WTC11 (cell line): ENCODE measurements at regions of chr1 and their contacts with region 1.

Region 1: DNA sequence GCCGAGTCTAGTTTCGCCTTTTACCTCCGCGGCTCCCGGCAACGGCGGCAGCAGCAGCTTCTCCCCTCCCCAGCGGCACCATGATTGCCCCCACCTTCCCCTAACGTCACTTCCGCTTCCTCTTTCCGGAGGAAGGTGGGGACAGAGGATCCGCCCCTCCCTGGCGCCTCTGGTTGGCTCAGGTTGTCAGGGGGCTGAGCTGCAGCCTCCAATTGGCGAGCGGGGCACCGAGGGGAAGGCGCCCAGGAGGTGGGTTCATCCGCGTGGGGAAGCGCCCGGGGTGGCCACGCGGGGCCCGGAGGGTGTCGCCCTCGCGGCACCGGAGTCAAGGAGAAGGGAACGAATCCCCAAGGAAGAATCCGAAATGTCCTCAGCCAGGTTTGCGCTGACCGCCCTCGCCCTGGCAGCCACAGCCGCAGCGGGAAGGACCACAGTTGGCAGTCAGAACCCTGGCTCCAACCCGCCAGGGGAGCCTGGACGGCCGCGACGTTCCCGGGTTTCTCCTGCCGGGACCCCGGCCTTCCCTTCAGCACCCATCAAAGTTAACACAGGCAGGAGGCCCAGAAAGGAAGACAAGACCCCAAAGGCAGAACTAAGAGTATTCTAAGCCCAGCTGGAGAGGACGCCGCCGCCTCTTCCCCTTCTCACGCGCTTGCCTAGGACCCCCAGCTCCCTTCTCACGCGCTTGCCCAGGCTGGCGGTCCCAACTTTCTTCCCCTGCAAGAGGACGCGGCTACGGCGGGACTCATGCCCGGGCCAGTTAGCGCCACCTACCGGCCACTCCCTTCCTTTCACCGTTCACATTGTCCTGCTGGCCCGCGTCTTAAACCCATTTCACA is at the start of gene MTF1:
- DNase-seq: peak; percentile 96
- ATAC-seq: peak; percentile 96
- H3K4me3 Mint-ChIP-seq: peak within 1 kb of the TSS; percentile 92
- H3K27ac Mint-ChIP-seq: peak within 1 kb of the TSS; percentile 92
- H3K4me1 Mint-ChIP-seq: peaks cover 9% of the 10 kb centered on the region
- H3K27me3 Mint-ChIP-seq: no peaks in the 10 kb centered on the region
- CTCF ChIP-seq: peak; percentile 90
- total RNA-seq, gene MTF1: 10.1 to 12.2 TPM (median 10.9 TPM) in 3 replicates

Region 2: DNA sequence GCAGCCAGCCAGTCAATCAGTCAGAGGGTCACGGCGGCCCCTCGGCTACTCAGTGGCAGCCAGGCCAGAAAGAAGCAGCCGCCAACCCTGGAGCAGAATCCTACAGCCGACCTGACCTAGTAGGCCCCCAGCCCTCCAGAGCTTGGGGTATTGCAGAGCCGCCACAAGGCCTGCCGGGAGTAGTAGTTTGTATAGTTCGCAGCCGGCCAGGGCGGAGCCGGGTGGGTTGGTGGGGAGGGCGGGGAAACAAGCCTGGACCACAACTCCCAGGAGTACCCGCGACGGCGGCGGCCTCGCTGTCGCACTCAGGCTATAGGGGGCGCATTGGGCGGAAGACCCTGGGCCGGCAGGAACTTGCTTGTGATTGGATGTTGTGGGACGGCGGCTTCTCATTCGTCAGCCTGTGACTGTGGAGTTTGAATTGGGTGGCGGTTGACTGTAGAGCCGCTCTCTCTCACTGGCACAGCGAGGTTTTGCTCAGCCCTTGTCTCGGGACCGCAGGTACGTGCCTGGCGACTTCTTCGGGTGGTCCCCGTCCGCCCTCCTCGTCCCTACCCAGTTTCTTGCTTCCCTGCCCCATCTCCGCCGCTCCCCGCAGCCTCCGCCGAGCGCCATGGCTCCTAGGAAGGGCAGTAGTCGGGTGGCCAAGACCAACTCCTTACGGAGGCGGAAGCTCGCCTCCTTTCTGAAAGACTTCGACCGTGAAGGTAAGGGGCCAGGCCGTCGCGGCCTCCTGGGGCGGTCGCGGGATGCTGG is 167.5 kb before region 1 on chr1 and contains the start of gene CDCA8:
- CTCF ChIA-PET with region 1: interaction called, 10 read pairs
- POLR2A ChIA-PET with region 1: no interaction called
- DNase-seq: peak; percentile 99
- ATAC-seq: peak; percentile 91
- H3K4me3 Mint-ChIP-seq: peak within 1 kb of the TSS; percentile 98
- H3K27ac Mint-ChIP-seq: peak within 1 kb of the TSS; percentile 78; the same call in 1 of the 2 replicates
- H3K4me1 Mint-ChIP-seq: peaks cover 16% of the 10 kb centered on the region
- H3K27me3 Mint-ChIP-seq: no peaks in the 10 kb centered on the region; the same call in 1 of the 2 replicates
- CTCF ChIP-seq: peak; percentile 27; the same call in 1 of the 2 replicates
- total RNA-seq, gene CDCA8: 42.1 to 47.7 TPM (median 43.3 TPM) in 3 replicates

Region 3: DNA sequence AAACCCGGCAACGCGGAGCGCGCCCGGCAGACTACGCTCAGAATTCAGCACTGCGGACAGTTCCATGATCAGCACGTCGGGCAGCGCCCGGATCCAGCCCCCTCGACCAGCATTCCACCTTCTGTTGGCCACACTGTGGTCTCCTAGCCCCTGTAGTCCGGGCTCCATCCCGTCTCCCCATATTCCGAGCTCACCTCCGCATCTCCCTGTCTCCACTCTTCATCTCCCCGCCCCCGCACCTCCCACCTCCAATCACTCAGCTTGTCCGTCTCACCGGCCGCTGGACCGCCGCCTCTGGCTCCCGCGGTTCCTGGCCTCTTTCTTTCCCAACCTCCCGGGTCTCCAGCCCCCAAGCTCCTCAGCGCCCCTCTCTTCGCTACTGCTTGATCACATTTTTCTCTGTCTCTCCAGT is 95.3 kb before region 1 on chr1:
- CTCF ChIA-PET with region 1: interaction called, 23 read pairs
- POLR2A ChIA-PET with region 1: no interaction called
- DNase-seq: peak; percentile 91
- ATAC-seq: peak; percentile 62
- H3K4me3 Mint-ChIP-seq: peak overlapping the region; percentile 78
- H3K27ac Mint-ChIP-seq: no peak overlapping the region
- H3K4me1 Mint-ChIP-seq: peaks cover 26% of the 10 kb centered on the region
- H3K27me3 Mint-ChIP-seq: peaks cover 84% of the 10 kb centered on the region
- CTCF ChIP-seq: no peak

Region 4: DNA sequence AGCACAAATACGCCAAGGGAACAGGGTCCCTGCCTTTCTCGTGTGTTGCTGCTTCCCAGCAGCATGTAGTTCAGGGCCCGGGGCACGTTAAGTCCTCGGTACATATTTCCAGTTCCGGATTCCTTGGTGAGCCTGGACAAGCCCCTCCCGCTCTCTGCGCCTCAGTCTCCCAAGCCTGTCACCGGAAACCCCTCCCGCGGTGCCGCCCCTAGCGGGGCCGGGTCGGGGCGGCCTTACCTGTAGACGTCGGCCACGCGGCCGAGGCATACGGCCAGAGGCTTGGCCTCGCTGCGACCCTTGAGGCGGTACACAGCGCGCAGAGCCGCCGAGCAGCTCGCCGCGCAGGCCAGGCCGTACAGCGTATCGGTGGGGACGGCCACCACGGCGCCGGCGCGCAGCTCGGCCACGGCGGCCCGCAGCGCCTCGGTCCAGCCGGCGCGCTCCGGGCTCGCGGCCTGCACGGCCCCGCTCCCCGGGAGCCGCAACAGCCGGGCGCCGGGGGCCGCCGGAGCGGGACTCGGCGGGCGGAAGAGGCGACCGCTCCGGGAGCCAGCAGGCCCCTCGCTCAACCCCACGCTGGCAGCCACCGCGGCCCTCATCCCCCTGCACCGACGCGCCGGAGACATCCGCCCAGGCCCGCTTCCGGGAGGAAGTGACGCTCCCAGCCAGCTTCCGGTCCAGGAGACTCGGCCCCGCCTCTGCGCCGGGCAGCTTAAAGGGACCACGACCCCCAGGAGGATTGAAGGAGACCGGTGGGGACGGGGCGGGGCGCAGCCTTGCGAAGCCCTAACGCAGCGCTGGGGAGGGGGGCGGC is 52.0 kb before region 1 on chr1 and contains the starts of genes C1orf122 and YRDC:
- CTCF ChIA-PET with region 1: interaction called, 34 read pairs
- POLR2A ChIA-PET with region 1: interaction called, 9 read pairs
- DNase-seq: peak; percentile 95
- ATAC-seq: peak; percentile 82
- H3K4me3 Mint-ChIP-seq: peak within 1 kb of the TSS; percentile 88
- H3K27ac Mint-ChIP-seq: peak within 1 kb of the TSS; percentile 78
- H3K4me1 Mint-ChIP-seq: peaks cover 11% of the 10 kb centered on the region; the same call in 1 of the 2 replicates
- H3K27me3 Mint-ChIP-seq: no peaks in the 10 kb centered on the region
- CTCF ChIP-seq: no peak
- total RNA-seq, gene C1orf122: 42.5 to 50.7 TPM (median 45.9 TPM) in 3 replicates
- total RNA-seq, gene YRDC: 20.1 to 24.6 TPM (median 22.7 TPM) in 3 replicates

Region 5: GRCh38 chr1:37836788-37837187 is 22.9 kb before region 1 on chr1:
- CTCF ChIA-PET with region 1: interaction called, 10 read pairs
- POLR2A ChIA-PET with region 1: no interaction called
- DNase-seq: no peak
- ATAC-seq: no peak
- H3K4me3 Mint-ChIP-seq: no peak overlapping the region
- H3K27ac Mint-ChIP-seq: no peak overlapping the region
- H3K4me1 Mint-ChIP-seq: no peaks in the 10 kb centered on the region
- H3K27me3 Mint-ChIP-seq: no peaks in the 10 kb centered on the region
- CTCF ChIP-seq: no peak

Region 6: DNA sequence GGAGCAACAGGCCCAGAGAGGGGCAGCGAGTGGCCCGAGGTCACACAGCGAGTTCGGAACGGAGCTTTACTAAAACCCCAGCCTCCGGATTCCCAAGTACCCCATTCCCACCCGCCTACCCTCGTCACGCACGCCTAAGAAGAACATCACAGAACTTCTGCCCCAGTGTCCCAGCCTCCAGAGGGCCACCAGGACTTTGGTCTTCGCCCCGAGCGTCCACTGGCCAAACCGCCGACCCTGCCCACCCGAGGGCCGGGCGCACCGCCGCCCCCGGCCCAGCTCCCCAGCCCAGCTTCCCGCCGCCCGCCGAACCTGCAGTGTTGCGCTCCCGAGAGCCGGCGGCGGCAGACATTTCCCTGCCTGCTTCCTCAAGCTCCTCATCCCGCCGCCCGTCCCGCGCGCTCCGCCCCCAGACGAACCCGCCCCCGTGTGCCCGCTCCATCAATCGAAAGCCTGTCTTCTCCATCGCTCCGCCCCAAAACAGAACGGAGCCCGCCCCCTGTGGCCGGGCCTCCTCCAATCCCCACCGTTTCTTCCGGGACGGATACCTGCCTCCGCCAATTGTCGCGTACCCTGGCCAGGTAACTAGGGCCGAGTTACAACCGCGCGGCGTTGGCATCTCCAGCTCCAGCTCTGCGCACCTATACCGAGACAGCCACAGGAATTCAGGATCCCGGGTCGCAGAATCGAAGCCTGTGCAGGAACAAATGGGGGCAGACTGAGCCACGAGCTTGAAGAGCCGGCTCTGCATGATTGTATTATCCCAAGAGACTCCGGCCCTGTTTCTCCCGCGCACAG is 71.8 kb after region 1 on chr1:
- CTCF ChIA-PET with region 1: interaction called, 33 read pairs
- POLR2A ChIA-PET with region 1: interaction called, 5 read pairs
- DNase-seq: peak; percentile 99
- ATAC-seq: peak; percentile 98
- H3K4me3 Mint-ChIP-seq: peak overlapping the region; percentile 94
- H3K27ac Mint-ChIP-seq: peak overlapping the region; percentile 87
- H3K4me1 Mint-ChIP-seq: peaks cover 17% of the 10 kb centered on the region
- H3K27me3 Mint-ChIP-seq: no peaks in the 10 kb centered on the region
- CTCF ChIP-seq: no peak